OCI-LY7 (cell line): ENCODE measurements at regions of chr6 and their contacts with region 1.

Region 1: DNA sequence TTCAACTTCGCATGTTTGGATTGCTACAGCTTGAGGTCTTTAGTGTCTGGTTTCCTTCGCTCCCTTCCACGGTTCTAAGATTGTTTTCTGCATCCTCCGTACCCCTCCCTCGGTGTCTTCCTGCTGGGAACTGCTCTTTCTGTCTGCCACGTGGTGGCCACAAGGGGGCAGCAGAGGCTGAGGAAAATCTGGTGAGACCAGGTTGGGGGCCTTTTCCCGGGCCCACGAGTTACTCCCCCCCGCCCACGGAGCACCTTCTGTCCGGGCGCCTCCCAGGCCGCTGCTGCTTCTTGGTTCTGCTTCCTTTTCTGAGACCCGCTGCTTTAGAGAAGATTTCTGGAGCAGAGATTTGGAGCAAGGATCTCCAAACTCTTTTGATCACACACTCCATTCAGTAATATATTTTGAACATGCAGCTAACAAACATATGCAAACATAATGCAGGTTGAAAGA is 21.1 kb upstream of the NOTCH4 start:
- DNase-seq: peak; percentile 89
- H3K4me3 ChIP-seq: peak overlapping the region; percentile 25
- H3K27ac ChIP-seq: peak overlapping the region; percentile 12
- H3K4me1 ChIP-seq: peaks cover 16% of the 10 kb centered on the region
- CTCF ChIP-seq: peak; percentile 95

Region 2: GRCh38 chr6:32271429-32271828 is 26.5 kb after region 1 on chr6:
- CTCF ChIA-PET with region 1: no interaction called
- POLR2A ChIA-PET with region 1: interaction called, 5 read pairs
- intact Hi-C with region 1: loop called (anchors 2 kb)
- DNase-seq: peak; percentile 94
- H3K4me3 ChIP-seq: peak overlapping the region; percentile 54
- H3K27ac ChIP-seq: peak overlapping the region; percentile 95
- H3K4me1 ChIP-seq: peaks cover 71% of the 10 kb centered on the region
- CTCF ChIP-seq: no peak

Region 3: DNA sequence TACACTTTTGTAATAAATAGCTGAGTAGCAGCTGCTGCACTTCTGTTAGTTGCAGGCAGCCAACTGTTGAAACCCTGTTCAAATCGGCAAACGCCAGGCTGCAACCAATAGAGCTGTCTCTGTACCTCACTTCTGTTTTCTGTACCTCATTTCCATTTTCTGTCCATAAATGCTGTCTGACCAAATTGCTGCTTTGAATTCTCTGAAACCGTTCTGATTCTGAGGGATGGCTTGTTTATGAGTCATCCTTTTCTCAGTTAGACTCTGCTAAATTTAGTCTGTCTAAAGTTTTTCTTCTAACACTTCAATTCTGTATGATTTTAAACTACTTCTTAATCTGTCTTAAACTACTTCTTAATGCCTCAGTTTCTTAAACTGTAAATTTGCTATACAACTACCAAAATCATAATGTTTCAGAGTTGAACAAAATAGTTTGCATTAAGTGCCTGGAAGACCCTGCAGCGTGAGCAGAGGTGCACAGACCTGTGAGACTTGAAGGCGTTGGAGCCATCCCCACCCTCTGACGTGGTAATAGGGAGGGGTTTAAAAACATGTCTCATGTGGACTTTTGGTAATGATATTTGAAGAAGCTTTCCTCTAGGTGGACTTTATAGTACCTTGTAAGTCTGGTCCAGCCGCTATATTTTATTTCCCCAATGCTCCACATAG is 152.4 kb after region 1 on chr6:
- CTCF ChIA-PET with region 1: interaction called, 3 read pairs
- POLR2A ChIA-PET with region 1: interaction called, 3 read pairs
- intact Hi-C with region 1: loop called (anchors 5 kb)
- DNase-seq: peak; percentile 80
- H3K4me3 ChIP-seq: peak overlapping the region; percentile 22
- H3K27ac ChIP-seq: peak overlapping the region; percentile 86
- H3K4me1 ChIP-seq: peaks cover 66% of the 10 kb centered on the region
- CTCF ChIP-seq: no peak

Region 4: DNA sequence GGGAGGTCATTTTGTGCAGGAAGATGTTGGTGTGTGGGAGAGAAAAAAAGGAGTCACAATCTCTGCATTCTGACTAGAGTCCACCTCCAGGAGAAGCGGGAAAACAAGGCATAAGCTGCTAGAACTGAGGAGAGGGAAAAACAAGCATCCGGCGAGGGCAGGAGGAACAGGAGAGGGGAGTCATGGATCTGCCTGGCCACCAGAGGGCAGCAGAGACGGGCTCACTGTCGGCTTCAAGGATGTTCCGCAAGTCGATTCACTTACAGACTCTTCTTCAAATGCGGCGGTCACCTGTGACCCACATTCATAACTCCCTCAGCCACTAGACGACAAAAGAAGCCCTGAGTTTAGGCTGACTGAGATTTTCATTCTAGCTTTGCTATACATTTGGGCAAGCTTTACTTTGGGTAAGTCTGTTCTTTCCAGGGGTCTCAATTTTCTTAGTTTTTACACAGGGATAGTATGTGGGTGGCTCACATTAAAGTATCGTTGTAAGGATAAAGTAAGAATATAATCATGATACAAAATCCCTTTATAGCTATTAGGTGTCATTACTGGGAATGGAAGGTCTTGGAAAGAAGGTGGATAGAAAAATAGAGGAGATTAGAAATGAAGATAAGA is 168.6 kb after region 1 on chr6:
- CTCF ChIA-PET with region 1: interaction called, 8 read pairs
- POLR2A ChIA-PET with region 1: no interaction called
- intact Hi-C with region 1: loop called (anchors 1 kb)
- DNase-seq: peak; percentile 82
- H3K4me3 ChIP-seq: no peak overlapping the region
- H3K27ac ChIP-seq: no peak overlapping the region
- H3K4me1 ChIP-seq: peaks cover 9% of the 10 kb centered on the region
- CTCF ChIP-seq: peak; percentile 96

Region 5: DNA sequence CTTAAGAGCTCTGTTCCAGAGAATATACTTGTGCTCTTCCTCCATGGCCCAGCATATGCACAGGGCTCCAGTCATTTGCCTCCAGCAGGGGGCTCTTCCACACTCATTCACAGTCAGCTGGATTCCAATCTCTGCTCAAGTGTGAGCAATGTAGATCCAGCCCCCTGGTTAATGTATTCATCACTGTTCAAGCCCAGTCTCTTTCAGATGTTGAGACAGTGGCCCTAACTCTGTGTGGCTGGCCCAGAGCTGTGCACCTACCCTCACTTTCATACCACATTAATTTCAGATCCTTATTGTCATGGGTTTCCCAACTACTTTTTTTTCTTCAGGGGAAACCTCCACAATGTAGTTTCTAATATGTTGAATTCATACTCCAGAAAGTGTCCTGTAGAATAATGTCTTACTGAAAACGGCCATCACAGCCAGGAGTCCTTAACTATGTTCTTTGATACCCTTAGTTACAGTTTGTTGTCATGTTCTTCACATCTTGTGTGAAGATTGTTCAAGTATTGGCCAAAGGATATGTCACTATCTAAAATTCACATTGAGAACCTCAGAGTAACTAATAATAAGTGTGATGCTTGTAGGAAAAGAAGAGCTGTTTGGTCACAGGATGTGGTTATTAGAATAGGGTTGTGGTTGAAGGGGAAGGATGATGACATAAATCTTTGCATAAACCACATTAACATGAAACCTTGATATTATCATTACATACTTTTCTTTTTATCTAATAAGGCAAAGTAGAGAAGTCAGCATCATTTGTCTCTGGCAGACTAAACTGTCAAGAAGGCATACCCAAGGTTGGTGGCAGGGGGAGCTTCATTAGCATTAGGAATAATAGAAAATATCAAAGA is 377.8 kb after region 1 on chr6:
- CTCF ChIA-PET with region 1: no interaction called
- POLR2A ChIA-PET with region 1: no interaction called
- intact Hi-C with region 1: loop called (anchors 10 kb)
- DNase-seq: peak; percentile 85
- H3K4me3 ChIP-seq: peak overlapping the region; percentile 49
- H3K27ac ChIP-seq: peak overlapping the region; percentile 91
- H3K4me1 ChIP-seq: peaks cover 69% of the 10 kb centered on the region
- CTCF ChIP-seq: peak; percentile 83

Region 6: GRCh38 chr6:32700391-32701040 is 455.5 kb after region 1 on chr6:
- CTCF ChIA-PET with region 1: no interaction called
- POLR2A ChIA-PET with region 1: no interaction called
- intact Hi-C with region 1: loop called (anchors 2 kb)
- DNase-seq: peak; percentile 70
- H3K4me3 ChIP-seq: no peak overlapping the region
- H3K27ac ChIP-seq: no peak overlapping the region
- H3K4me1 ChIP-seq: peaks cover 6% of the 10 kb centered on the region
- CTCF ChIP-seq: peak; percentile 95

Region 7: GRCh38 chr6:32796848-32797776 is 552.1 kb after region 1 on chr6:
- CTCF ChIA-PET with region 1: no interaction called
- POLR2A ChIA-PET with region 1: no interaction called
- intact Hi-C with region 1: loop called (anchors 5 kb)
- DNase-seq: peak; percentile 85
- H3K4me3 ChIP-seq: peak overlapping the region; percentile 44
- H3K27ac ChIP-seq: peak overlapping the region; percentile 57
- H3K4me1 ChIP-seq: peaks cover 34% of the 10 kb centered on the region
- CTCF ChIP-seq: peak; percentile 97